ENCODE measurements at regions of chr1 and their contacts with region 1.

Region 1: GRCh38 chr1:202184750-202185460 is 8.7 kb upstream of the LGR6 start:
- DNase-seq: peak; percentile 83
- H3K4me3 ChIP-seq: no peak overlapping the region
- H3K27ac ChIP-seq: no peak overlapping the region
- H3K4me1 ChIP-seq: no peaks in the 10 kb centered on the region
- H3K27me3 ChIP-seq: peaks cover 8 to 13% of the 10 kb centered on the region in 2 experiments
- CTCF ChIP-seq: peak; percentile 90 to 92
- POLR2A ChIP-seq: no peak

Region 2: DNA sequence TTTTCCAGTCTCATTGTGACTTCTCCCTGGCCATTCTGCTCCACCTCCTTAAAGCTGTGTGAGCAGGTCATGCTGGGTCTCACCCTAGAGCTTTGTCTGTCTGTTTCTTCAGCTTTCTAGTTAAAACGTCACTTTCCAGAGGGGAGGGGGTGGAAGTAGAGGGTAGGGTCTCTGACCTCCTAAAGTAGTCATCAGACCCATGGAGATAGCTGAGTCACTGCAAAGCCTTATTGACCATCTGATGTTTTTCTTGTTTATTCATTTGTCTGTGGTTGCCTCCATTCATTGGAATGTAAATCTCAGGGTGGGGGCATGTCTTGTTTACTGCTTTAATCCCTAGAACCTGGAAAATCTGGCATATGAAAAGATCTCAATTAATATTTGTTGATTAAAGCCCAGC is 121.8 kb before region 1 on chr1:
- CTCF ChIA-PET with region 1: no interaction called
- POLR2A ChIA-PET with region 1: no interaction called
- dilution Hi-C with region 1: no loop called
- intact Hi-C with region 1: no loop called
- DNase-seq: no peak
- H3K4me3 ChIP-seq: no peak overlapping the region
- H3K27ac ChIP-seq: no peak overlapping the region
- H3K4me1 ChIP-seq: peaks cover 8% of the 10 kb centered on the region
- H3K27me3 ChIP-seq: peaks cover 0 to 6% of the 10 kb centered on the region in 2 experiments
- CTCF ChIP-seq: no peak
- POLR2A ChIP-seq: no peak

Region 3: DNA sequence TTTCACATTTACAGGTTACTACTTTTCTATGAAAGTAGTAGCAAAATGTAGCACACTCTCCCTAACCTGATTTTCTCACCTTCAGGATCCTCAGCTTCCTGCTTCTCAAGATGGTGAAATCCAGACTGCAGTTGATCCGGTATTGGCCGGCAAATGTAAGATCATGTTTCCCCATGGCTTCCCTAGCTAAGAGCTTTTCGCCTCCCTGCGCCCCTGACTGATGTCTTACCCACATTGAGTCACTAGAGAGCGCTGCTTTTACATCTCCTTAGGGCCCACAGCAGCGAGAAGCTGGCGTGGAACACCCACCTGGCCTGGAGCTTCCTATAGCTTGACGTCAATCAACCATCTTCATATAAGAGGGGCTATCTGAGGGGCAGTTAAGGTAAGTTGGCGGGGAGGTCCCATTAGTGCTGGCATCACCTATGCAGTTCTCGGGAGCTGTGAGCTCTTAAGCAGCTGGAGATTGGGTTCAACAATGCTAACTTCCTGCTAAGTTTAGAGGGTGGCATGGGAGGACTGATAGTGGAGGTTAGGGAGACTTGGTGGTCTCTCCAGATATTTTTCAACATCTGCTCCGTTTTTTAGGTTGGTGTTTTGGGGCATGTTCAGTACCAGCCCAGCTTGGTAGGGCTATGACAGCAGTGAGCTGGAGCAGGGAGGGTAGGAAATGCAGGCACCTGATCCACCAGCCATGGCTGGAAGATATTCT is 30.0 kb before region 1 on chr1:
- CTCF ChIA-PET with region 1: interaction called, 24 read pairs
- POLR2A ChIA-PET with region 1: no interaction called
- dilution Hi-C with region 1: no loop called
- intact Hi-C with region 1: no loop called
- DNase-seq: peak; percentile 59
- H3K4me3 ChIP-seq: no peak overlapping the region
- H3K27ac ChIP-seq: no peak overlapping the region
- H3K4me1 ChIP-seq: peaks cover 15% of the 10 kb centered on the region
- H3K27me3 ChIP-seq: no peaks in the 10 kb centered on the region
- CTCF ChIP-seq: peak; percentile 41 to 54
- POLR2A ChIP-seq: no peak

Region 4: GRCh38 chr1:202200112-202200566 is 15.2 kb after region 1 on chr1:
- CTCF ChIA-PET with region 1: interaction called, 24 read pairs
- POLR2A ChIA-PET with region 1: no interaction called
- dilution Hi-C with region 1: no loop called
- intact Hi-C with region 1: no loop called
- DNase-seq: no peak
- H3K4me3 ChIP-seq: no peak overlapping the region
- H3K27ac ChIP-seq: no peak overlapping the region
- H3K4me1 ChIP-seq: no peaks in the 10 kb centered on the region
- H3K27me3 ChIP-seq: peaks cover 20 to 31% of the 10 kb centered on the region in 2 experiments
- CTCF ChIP-seq: no peak
- POLR2A ChIP-seq: no peak

Region 5: GRCh38 chr1:202235856-202236837 is 51.2 kb after region 1 on chr1:
- CTCF ChIA-PET with region 1: interaction called, 8 read pairs
- POLR2A ChIA-PET with region 1: no interaction called
- dilution Hi-C with region 1: no loop called
- intact Hi-C with region 1: loop called (anchors 2 kb)
- DNase-seq: peak; percentile 56
- H3K4me3 ChIP-seq: no peak overlapping the region
- H3K27ac ChIP-seq: peak overlapping the region; percentile 49
- H3K4me1 ChIP-seq: peaks cover 13% of the 10 kb centered on the region
- H3K27me3 ChIP-seq: peaks cover 0 to 4% of the 10 kb centered on the region in 2 experiments
- CTCF ChIP-seq: peak; percentile 80 to 88
- POLR2A ChIP-seq: no peak

Region 6: GRCh38 chr1:202329891-202330290 is 145.0 kb after region 1 on chr1:
- CTCF ChIA-PET with region 1: interaction called, 11 read pairs
- POLR2A ChIA-PET with region 1: no interaction called
- dilution Hi-C with region 1: no loop called
- intact Hi-C with region 1: no loop called
- DNase-seq: no peak
- H3K4me3 ChIP-seq: no peak overlapping the region
- H3K27ac ChIP-seq: no peak overlapping the region
- H3K4me1 ChIP-seq: no peaks in the 10 kb centered on the region
- H3K27me3 ChIP-seq: no peaks in the 10 kb centered on the region
- CTCF ChIP-seq: no peak
- POLR2A ChIP-seq: no peak